Thyroid gland (tissue), 4 donors: ENCODE measurements at regions of chr19 and their contacts with region 1.

Region 1: GRCh38 chr19:8252922-8253589 is 43.9 kb downstream of the CERS4 start:
- DNase-seq: peak; percentile 78 to 84
- H3K4me3 ChIP-seq: no peak overlapping the region
- H3K27ac ChIP-seq: no peak overlapping the region
- H3K4me1 ChIP-seq: peaks cover 16 to 20% of the 10 kb centered on the region in 2 donors
- H3K27me3 ChIP-seq: no peaks in the 10 kb centered on the region
- CTCF ChIP-seq: peak; percentile 86 to 98 (median 94)
- POLR2A ChIP-seq: no peak

Region 2: DNA sequence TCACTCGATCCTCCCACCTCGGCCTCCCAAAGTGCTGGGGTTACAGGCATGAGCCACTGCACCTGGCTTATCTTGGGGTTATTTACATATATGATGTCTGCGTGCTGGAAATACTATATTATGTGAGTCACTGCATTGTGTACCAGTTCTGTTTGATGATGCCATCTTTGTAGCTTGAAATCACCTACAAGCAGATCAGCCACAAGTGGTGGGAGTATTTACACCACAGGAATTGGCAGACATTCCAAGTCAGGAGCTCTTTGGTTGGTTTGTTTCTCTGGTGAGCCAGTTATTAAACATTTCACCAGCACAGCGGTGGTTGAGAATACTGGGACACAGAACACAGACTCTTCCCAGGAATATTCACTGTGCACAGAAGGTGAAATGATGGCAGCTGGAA is 305.1 kb before region 1 on chr19:
- intact Hi-C with region 1: loop called (anchors 5 kb)
- DNase-seq: no peak
- H3K4me3 ChIP-seq: no peak overlapping the region
- H3K27ac ChIP-seq: no peak overlapping the region
- H3K4me1 ChIP-seq: no peaks in the 10 kb centered on the region
- H3K27me3 ChIP-seq: no peaks in the 10 kb centered on the region
- CTCF ChIP-seq: no peak
- POLR2A ChIP-seq: no peak

Region 3: DNA sequence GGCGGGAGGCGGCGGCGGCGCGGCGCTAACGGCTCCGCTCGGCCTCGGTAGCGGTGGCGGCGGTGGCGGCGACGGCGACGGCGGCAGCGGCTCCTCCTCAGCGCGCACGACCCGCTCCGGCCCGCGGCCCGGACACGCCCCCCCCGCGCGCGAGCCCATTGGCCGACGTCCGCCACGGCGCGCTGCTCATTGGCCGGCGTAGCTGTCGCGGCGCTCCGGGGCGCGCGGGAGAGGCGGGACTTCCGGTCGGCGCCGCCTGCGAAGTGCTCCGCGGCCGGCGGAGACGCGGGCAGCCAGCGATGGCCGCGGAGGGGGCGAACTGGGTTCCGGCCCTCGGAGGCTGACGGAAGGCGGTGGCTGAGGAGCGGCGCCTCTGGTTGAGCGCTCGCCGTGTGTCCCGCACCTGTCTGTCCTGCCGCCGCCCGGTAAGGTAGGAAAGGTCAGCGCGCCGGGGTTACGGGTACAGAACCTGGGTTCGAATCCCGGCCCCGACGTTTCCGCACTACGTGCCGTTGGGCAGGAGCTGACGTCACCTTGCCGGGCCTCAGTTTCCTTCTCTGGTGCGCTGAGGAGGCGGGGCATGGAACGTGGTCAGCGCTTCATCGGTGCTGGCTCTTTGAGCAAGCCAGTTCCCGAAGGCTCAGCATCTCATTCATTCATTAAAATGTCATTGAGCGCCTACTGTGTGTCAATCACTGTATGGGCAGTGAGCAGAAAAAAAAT is 247.4 kb before region 1 on chr19 and contains the start of gene ELAVL1:
- intact Hi-C with region 1: loop called (anchors 10 kb)
- DNase-seq: peak; percentile 89
- H3K4me3 ChIP-seq: peak within 1 kb of the TSS; percentile 58 to 93 (median 70)
- H3K27ac ChIP-seq: peak within 1 kb of the TSS; percentile 9 to 81 (median 68)
- H3K4me1 ChIP-seq: peaks cover 31 to 32% of the 10 kb centered on the region in 2 donors
- H3K27me3 ChIP-seq: no peaks in the 10 kb centered on the region
- CTCF ChIP-seq: no peak
- POLR2A ChIP-seq: peak in 1 of 2 donors; percentile 77
- total RNA-seq, gene ELAVL1: 24.2 to 46.7 (median 42.4) TPM

Region 4: DNA sequence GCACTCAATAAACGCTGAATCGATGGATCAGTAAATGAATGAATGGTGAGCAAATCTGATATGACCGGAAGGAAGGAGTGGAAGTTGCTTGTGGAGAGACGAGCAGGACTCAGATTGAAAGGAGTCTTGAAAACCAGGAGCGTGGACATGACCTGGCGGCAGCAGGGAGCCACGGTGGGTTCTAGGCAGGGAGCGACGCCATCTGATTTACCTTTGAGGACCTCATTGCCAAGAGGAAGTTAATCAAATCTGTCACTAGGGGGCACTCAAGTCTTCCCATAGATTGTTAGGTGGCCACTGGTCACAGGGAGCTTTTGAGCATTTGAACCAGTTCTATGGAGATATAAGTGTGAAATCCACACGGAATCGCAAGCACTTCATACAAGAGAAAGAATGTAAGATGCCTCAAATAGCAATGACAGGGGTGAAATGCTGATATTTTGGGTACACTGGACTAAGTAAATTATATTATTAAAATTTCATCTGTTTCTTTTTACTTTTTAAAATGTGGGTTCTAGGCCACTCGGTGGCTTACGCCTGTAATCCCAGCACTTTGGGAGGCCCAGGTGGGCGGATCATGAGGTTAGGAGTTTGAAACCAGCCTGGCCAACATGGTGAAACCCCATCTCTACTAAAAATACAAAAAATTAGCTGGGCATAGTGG is 94.5 kb before region 1 on chr19:
- intact Hi-C with region 1: loop called (anchors 2 kb)
- DNase-seq: peak; percentile 60
- H3K4me3 ChIP-seq: no peak overlapping the region
- H3K27ac ChIP-seq: no peak overlapping the region
- H3K4me1 ChIP-seq: peaks cover 7 to 9% of the 10 kb centered on the region in 2 donors
- H3K27me3 ChIP-seq: no peaks in the 10 kb centered on the region
- CTCF ChIP-seq: peak; percentile 53 to 85 (median 78)
- POLR2A ChIP-seq: no peak

Region 5: DNA sequence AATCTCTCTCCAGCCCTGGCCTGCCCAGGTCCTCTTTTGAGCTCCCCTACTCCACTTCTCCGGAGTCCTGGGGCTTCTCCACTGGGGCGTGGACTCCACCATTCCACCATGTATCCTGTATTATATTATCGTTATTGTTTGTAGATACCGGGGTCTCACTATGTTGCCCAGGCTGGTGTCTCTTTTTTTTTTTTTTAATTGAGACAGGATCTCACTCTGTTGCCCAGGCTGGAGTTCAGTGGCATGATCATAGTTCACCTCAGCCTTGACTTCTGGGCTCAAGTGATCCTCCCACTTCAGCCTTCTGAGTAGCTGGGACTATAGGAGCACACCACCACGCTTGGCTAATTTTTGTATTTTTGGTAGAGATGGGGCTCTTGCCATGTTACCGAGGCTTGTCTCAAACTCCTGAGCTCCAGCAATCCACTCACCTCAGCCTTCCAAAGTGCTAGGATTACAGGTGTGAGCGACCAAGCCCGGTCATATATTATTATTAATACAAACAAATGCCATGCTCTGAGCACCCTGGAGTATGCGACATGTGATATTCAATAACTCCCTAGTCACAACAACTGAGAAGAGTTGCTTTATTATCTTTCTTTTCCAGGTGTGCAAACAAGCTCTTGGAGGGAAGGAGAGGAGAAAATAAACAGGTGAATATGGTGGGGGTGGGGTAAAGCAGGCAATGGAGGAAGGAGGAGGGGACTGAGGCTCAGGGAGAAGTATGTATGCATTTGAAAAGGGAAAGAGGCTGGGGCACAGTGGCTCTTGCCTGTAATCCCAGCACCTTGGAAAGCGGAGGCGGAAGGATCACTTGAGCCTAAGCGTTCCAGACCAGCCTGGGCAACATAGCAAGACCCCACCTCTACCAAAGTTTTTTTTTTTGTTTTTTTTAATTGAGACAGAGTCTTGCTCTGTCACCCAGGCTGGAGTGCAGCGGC is 46.6 kb before region 1 on chr19:
- intact Hi-C with region 1: loop called (anchors 2 kb)
- DNase-seq: peak; percentile 60 to 70
- H3K4me3 ChIP-seq: no peak overlapping the region
- H3K27ac ChIP-seq: peak overlapping the region; percentile 19 to 44 (median 38)
- H3K4me1 ChIP-seq: peaks cover 40 to 46% of the 10 kb centered on the region in 2 donors
- H3K27me3 ChIP-seq: no peaks in the 10 kb centered on the region
- CTCF ChIP-seq: no peak
- POLR2A ChIP-seq: no peak

Region 6: GRCh38 chr19:8221161-8221560 is 31.9 kb before region 1 on chr19:
- intact Hi-C with region 1: no loop called
- DNase-seq: peak; percentile 96 to 97
- H3K4me3 ChIP-seq: no peak overlapping the region
- H3K27ac ChIP-seq: peak overlapping the region; percentile 68 to 91 (median 82)
- H3K4me1 ChIP-seq: peaks cover 34 to 35% of the 10 kb centered on the region in 2 donors
- H3K27me3 ChIP-seq: no peaks in the 10 kb centered on the region
- CTCF ChIP-seq: no peak
- POLR2A ChIP-seq: no peak